Panc1 (cell line): ENCODE measurements at regions of chrX and their contacts with region 1.

Region 1: GRCh38 chrX:49029876-49030275 is 13.3 kb downstream of the TFE3 start:
- DNase-seq: no peak
- ATAC-seq: peak; percentile 54
- H3K4me3 ChIP-seq: no peak overlapping the region
- H3K27ac ChIP-seq: no peak overlapping the region
- H3K4me1 ChIP-seq: no peaks in the 10 kb centered on the region
- H3K27me3 ChIP-seq: no peaks in the 10 kb centered on the region
- CTCF ChIP-seq: no peak

Region 2: DNA sequence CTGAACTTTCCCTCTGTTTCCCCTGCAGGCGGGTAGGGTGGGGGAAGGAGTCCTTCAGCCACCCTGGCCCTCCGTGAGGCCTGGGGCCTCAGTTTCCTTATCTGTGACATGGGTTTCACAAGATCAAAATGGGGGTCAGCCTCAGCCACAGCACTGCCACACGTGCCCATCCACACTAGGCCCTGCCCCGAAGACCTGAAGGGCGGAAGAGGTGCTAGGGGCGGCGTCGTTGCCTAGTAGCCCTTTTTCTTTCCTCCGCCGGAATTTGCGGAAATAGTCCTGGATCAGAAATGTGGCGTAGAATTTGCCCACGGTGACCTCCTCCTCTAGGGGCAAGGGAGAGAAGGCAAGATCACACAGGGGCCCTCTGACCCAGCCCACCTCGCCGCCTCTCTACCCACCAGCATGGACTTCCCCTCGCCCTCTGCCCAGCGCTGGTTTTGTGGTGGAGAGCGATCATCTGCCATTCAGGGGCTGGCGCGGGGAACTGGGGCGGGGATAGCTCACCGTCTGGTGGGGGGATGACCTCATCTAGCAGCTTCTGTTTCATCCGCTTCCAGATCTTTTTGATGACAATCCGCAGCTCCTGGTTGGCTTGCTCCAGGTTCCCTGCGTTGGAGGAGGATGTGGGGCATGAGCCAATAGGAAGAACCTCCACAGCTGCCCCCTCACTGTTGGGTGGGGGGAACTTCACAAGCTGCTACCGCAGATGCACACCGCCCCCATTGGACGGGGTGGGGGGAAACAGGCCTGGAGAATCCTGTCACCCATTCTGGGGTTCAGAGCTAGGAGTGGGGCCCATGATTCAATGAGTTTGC is 179.8 kb after region 1 on chrX:
- CTCF ChIA-PET with region 1: no interaction called
- POLR2A ChIA-PET with region 1: no interaction called
- in situ Hi-C with region 1: no loop called
- intact Hi-C with region 1: no loop called
- DNase-seq: no peak
- ATAC-seq: no peak
- H3K4me3 ChIP-seq: no peak overlapping the region
- H3K27ac ChIP-seq: no peak overlapping the region
- H3K4me1 ChIP-seq: no peaks in the 10 kb centered on the region
- H3K27me3 ChIP-seq: no peaks in the 10 kb centered on the region
- CTCF ChIP-seq: no peak

Region 3: DNA sequence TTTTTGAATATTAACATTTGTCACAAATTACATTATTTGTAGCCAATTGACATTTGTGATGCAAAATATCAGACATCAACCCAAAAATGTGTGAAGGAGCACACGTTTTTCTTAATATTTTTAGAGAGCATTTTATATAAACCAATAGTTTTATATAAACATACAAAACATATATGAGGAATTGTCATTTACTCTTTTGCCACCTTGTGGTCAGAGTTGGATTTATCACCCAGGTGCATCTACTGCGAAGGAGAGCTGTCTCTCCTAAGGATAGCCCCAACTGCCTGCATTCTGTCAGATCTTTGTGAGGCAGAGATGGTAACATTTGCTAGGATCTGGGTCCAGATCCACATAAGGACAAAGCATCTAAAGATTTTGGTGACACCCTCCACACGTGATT is 846.9 kb after region 1 on chrX:
- CTCF ChIA-PET with region 1: no interaction called
- POLR2A ChIA-PET with region 1: interaction called, 10 read pairs
- in situ Hi-C with region 1: no loop called
- intact Hi-C with region 1: no loop called
- DNase-seq: peak; percentile 22
- ATAC-seq: no peak
- H3K4me3 ChIP-seq: no peak overlapping the region
- H3K27ac ChIP-seq: no peak overlapping the region
- H3K4me1 ChIP-seq: no peaks in the 10 kb centered on the region; the same call in 1 of the 2 replicates
- H3K27me3 ChIP-seq: no peaks in the 10 kb centered on the region; the same call in 1 of the 2 replicates
- CTCF ChIP-seq: peak; percentile 72